Right cardiac atrium (tissue), 5 donors: ENCODE measurements at regions of chr14 and their contacts with region 1.

Region 1: GRCh38 chr14:73503648-73504047 is 12.9 kb downstream of the RIOX1 start:
- DNase-seq: no peak
- ATAC-seq: no peak
- H3K4me3 ChIP-seq: no peak overlapping the region
- H3K27ac ChIP-seq: no peak overlapping the region
- H3K4me1 ChIP-seq: no peaks in the 10 kb centered on the region
- H3K27me3 ChIP-seq: no peaks in the 10 kb centered on the region

Region 2: DNA sequence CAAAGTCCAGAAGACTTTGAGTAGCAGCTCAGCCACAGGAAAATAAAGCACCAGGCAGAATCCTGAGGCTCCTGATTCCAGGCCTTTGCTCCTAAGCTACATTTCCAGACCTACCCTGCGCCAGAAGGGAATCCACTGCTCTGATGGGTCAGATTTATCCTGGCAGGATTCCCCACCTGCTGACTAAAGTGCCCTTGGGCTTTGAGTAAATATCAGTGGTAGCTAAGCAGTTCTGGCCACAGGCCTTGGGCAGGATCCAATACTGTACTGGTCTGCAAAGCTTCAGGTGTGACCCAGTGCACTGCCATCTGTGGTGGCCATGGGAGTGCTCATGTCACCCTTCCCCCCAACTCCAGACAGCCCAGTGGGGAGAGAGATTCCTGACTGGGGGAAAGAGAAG is 22.9 kb after region 1 on chr14:
- intact Hi-C with region 1: no loop called
- DNase-seq: peak in 1 of 3 donors; percentile 34
- ATAC-seq: peak; percentile 67 to 69
- H3K4me3 ChIP-seq: no peak overlapping the region
- H3K27ac ChIP-seq: no peak overlapping the region
- H3K4me1 ChIP-seq: peaks cover 3% of the 10 kb centered on the region
- H3K27me3 ChIP-seq: no peaks in the 10 kb centered on the region

Region 3: DNA sequence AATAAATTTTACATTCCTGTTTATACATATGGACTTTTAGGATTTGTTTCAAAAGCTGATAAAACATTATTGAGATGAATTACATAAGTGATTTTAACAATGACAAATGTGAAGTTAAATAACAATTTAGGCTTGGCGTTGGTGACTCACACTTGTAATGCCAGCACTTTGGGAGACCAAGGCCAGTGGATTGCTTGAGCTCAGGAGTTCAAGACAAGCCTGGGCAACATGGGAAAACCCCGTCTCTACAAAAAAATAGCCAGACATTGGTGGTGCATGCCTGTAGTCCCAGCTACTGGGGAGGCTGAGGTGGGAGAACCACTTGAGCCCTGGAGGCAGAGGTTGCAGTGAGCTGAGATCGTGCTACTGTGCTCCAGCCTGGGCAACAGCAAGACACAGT is 72.7 kb after region 1 on chr14:
- intact Hi-C with region 1: loop called in 1 of 4 experiments (anchors 10 kb)
- DNase-seq: no peak
- ATAC-seq: no peak
- H3K4me3 ChIP-seq: no peak overlapping the region
- H3K27ac ChIP-seq: no peak overlapping the region
- H3K4me1 ChIP-seq: no peaks in the 10 kb centered on the region
- H3K27me3 ChIP-seq: no peaks in the 10 kb centered on the region

Region 4: GRCh38 chr14:73633116-73634010 is 129.7 kb after region 1 on chr14:
- intact Hi-C with region 1: loop called in 2 of 4 experiments (anchors 2 to 5 kb)
- DNase-seq: peak; percentile 54 to 82 (median 79)
- ATAC-seq: peak; percentile 88 to 90
- H3K4me3 ChIP-seq: peak overlapping the region; percentile 45
- H3K27ac ChIP-seq: no peak overlapping the region
- H3K4me1 ChIP-seq: no peaks in the 10 kb centered on the region
- H3K27me3 ChIP-seq: no peaks in the 10 kb centered on the region